PC-3 (cell line): ENCODE measurements at regions of chr4 and their contacts with region 1.

Region 1: DNA sequence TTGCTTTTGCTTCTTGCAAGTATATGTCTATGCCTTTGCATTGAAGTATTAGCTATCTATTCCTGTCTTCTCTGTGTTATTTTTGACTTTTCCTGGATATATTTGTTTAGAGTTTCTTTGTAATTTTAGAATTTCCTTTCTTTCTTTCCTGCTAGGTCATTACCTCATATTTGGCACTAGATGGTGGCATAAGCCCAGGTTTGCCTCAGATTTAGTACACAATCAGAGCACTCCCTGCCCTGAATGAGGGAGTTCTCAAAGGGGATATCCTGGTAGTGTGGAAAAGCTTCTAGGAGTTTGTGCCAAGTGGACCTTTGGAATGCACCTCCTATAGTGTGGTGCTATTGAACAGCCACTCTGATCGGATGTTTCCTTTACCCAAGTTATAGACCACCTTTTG is 181.6 kb downstream of the UGT8 start:
- DNase-seq: peak; percentile 36
- ATAC-seq: peak; percentile 64; the same call in 1 of the 2 replicates
- H3K4me3 ChIP-seq: no peak overlapping the region
- H3K27ac ChIP-seq: no peak overlapping the region
- H3K4me1 ChIP-seq: no peaks in the 10 kb centered on the region
- H3K27me3 ChIP-seq: no peaks in the 10 kb centered on the region
- CTCF ChIP-seq: peak; percentile 59

Region 2: GRCh38 chr4:115113125-115114106 is 333.2 kb after region 1 on chr4 and contains the start of gene NDST4:
- CTCF ChIA-PET with region 1: no interaction called
- POLR2A ChIA-PET with region 1: no interaction called
- intact Hi-C with region 1: loop called (anchors 10 kb)
- DNase-seq: peak; percentile 36
- ATAC-seq: peak; percentile 83
- H3K4me3 ChIP-seq: peak within 1 kb of the TSS; percentile 62
- H3K27ac ChIP-seq: peak within 1 kb of the TSS; percentile 14; the same call in 1 of the 2 replicates
- H3K4me1 ChIP-seq: peaks cover 12% of the 10 kb centered on the region; the same call in 1 of the 2 replicates
- H3K27me3 ChIP-seq: peaks cover 15% of the 10 kb centered on the region
- CTCF ChIP-seq: no peak
- total RNA-seq, gene NDST4: not detected in 2 replicates